Heart left ventricle (tissue), 16 donors: ENCODE measurements at regions of chr20 and their contacts with region 1.

Region 1: GRCh38 chr20:61673152-61673847 is 392.4 kb downstream of the TAF4 start:
- DNase-seq: no peak
- ATAC-seq: no peak
- H3K4me3 ChIP-seq: no peak overlapping the region
- H3K27ac ChIP-seq: no peak overlapping the region
- H3K4me1 ChIP-seq: no peaks in the 10 kb centered on the region
- H3K27me3 ChIP-seq: peaks cover 0 to 7% (median 0%) of the 10 kb centered on the region in 9 donors
- CTCF ChIP-seq: no peak
- POLR2A ChIP-seq: no peak

Region 2: DNA sequence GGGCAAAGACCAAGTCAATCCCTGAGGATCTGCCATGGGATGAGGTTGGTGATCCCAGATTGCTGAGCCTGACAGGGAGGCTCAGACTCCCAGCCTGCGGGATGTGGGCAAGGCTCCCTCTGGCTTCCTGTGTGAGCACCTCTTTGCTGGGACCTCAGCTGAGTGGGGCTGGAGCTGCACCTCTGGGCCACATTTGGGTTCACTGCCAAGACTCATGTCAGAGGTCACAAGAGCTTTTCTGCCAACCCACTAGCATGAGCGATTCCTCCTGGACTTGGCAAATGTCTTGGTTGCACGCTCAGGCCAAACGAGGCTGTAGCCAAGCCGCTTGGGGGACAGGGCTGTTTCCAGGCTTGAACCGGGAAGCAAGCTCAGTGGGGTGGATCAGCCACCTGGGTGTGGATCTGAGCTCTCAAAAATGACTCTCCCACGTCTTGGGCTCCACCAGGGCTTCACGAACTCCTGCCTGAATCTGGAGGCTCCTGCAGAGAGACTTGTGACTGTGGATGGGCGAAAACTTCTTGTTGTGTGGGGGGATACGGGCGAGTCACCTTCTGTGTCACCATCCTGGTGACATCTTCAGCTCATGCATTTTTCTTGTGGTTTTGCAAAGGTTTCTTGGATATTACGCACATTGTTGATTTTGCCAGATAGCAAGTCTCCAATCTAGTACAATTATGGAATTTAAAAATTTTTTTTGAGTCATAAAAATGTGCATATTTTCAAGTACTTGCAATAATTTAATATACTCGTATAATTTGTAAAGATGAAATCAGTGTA is 61.7 kb before region 1 on chr20:
- intact Hi-C with region 1: loop called in 1 of 10 experiments (anchors 10 kb)
- DNase-seq: peak in 1 of 5 donors; percentile 43
- ATAC-seq: no peak
- H3K4me3 ChIP-seq: no peak overlapping the region
- H3K27ac ChIP-seq: no peak overlapping the region
- H3K4me1 ChIP-seq: no peaks in the 10 kb centered on the region
- H3K27me3 ChIP-seq: peaks cover 0 to 20% (median 0%) of the 10 kb centered on the region in 9 donors
- CTCF ChIP-seq: no peak
- POLR2A ChIP-seq: no peak